B cell (primary cell): ENCODE measurements at regions of chr7 and their contacts with region 1.

Region 1: GRCh38 chr7:136009488-136010079 is 32.4 kb upstream of the MTPN start:
- DNase-seq: peak; percentile 70
- ATAC-seq: peak; percentile 41
- H3K4me3 ChIP-seq: no peak overlapping the region
- H3K4me3 Mint-ChIP-seq: no peak overlapping the region
- H3K27ac ChIP-seq: no peak overlapping the region
- H3K27ac Mint-ChIP-seq: no peak overlapping the region
- H3K4me1 ChIP-seq: peaks cover 0 to 5% of the 10 kb centered on the region in 2 donors
- H3K4me1 Mint-ChIP-seq: peaks cover 7% of the 10 kb centered on the region
- H3K27me3 ChIP-seq: no peaks in the 10 kb centered on the region
- H3K27me3 Mint-ChIP-seq: peaks cover 4% of the 10 kb centered on the region
- CTCF ChIP-seq: peak; percentile 91

Region 2: GRCh38 chr7:135795846-135796570 is 213.6 kb before region 1 on chr7:
- CTCF ChIA-PET with region 1: interaction called, 129 read pairs
- POLR2A ChIA-PET with region 1: no interaction called
- intact Hi-C with region 1: no loop called
- DNase-seq: no peak
- ATAC-seq: no peak
- H3K4me3 ChIP-seq: no peak overlapping the region
- H3K4me3 Mint-ChIP-seq: no peak overlapping the region
- H3K27ac ChIP-seq: no peak overlapping the region
- H3K27ac Mint-ChIP-seq: no peak overlapping the region
- H3K4me1 ChIP-seq: peaks cover 2 to 4% of the 10 kb centered on the region in 2 donors
- H3K4me1 Mint-ChIP-seq: peaks cover 5% of the 10 kb centered on the region
- H3K27me3 ChIP-seq: peaks cover 0 to 17% (median 8%) of the 10 kb centered on the region in 4 experiments
- H3K27me3 Mint-ChIP-seq: peaks cover 25% of the 10 kb centered on the region
- CTCF ChIP-seq: no peak

Region 3: DNA sequence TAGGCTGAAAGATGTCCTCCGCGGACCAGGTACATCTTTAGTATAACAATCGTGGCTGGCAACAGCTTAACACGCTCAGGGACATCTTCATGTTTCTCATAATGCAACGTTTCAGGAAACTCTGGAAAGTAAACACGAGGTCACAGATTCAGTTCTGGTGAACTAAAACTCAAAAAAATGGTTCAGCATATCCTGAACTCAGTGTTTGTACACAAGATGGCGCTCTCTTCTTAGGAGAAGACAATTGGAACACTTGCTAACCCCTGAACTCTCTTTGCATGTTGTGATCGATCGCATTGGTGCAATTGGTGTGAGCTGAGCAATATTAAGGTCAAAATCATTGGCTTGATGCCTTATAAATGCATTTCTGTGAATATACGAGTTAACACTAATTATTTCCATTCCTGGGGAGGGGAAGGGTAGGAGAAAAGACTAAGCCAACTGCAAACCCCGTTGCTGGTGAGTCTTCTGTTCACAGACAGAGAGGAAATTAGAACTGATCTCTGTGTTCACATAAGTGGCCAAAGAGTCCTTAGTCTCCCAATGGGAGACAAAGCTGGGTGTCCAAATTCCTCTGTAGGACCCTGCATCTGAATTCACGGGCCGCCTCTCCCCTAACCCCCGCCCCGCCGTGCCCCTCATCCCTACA is 208.4 kb before region 1 on chr7:
- CTCF ChIA-PET with region 1: interaction called, 129 read pairs
- POLR2A ChIA-PET with region 1: no interaction called
- intact Hi-C with region 1: no loop called
- DNase-seq: peak; percentile 78
- ATAC-seq: peak; percentile 58
- H3K4me3 ChIP-seq: no peak overlapping the region
- H3K4me3 Mint-ChIP-seq: peak overlapping the region; percentile 52
- H3K27ac ChIP-seq: no peak overlapping the region
- H3K27ac Mint-ChIP-seq: no peak overlapping the region
- H3K4me1 ChIP-seq: peaks cover 5 to 8% of the 10 kb centered on the region in 2 donors
- H3K4me1 Mint-ChIP-seq: peaks cover 11% of the 10 kb centered on the region
- H3K27me3 ChIP-seq: peaks cover 0 to 17% (median 8%) of the 10 kb centered on the region in 4 experiments
- H3K27me3 Mint-ChIP-seq: peaks cover 14% of the 10 kb centered on the region
- CTCF ChIP-seq: peak; percentile 96

Region 4: GRCh38 chr7:135965602-135966001 is 44.0 kb before region 1 on chr7:
- CTCF ChIA-PET with region 1: interaction called, 8 read pairs
- POLR2A ChIA-PET with region 1: no interaction called
- intact Hi-C with region 1: loop called (anchors 5 kb)
- DNase-seq: no peak
- ATAC-seq: no peak
- H3K4me3 ChIP-seq: peak overlapping the region in 2 of 5 experiments; percentile 2 to 43
- H3K4me3 Mint-ChIP-seq: peak overlapping the region; percentile 79
- H3K27ac ChIP-seq: peak overlapping the region in 1 of 2 donors; percentile 51
- H3K27ac Mint-ChIP-seq: peak overlapping the region; percentile 48
- H3K4me1 ChIP-seq: peaks cover 64 to 91% of the 10 kb centered on the region in 2 donors
- H3K4me1 Mint-ChIP-seq: peaks cover 85% of the 10 kb centered on the region
- H3K27me3 ChIP-seq: no peaks in the 10 kb centered on the region
- H3K27me3 Mint-ChIP-seq: no peaks in the 10 kb centered on the region
- CTCF ChIP-seq: no peak

Region 5: GRCh38 chr7:135993950-135994349 is 15.6 kb before region 1 on chr7:
- CTCF ChIA-PET with region 1: interaction called, 25 read pairs
- POLR2A ChIA-PET with region 1: no interaction called
- intact Hi-C with region 1: no loop called
- DNase-seq: peak; percentile 33
- ATAC-seq: no peak
- H3K4me3 ChIP-seq: peak overlapping the region in 2 of 5 experiments; percentile 1 to 12
- H3K4me3 Mint-ChIP-seq: peak overlapping the region; percentile 16
- H3K27ac ChIP-seq: no peak overlapping the region
- H3K27ac Mint-ChIP-seq: peak overlapping the region; percentile 63
- H3K4me1 ChIP-seq: peaks cover 21 to 22% of the 10 kb centered on the region in 2 donors
- H3K4me1 Mint-ChIP-seq: peaks cover 33% of the 10 kb centered on the region
- H3K27me3 ChIP-seq: no peaks in the 10 kb centered on the region
- H3K27me3 Mint-ChIP-seq: no peaks in the 10 kb centered on the region
- CTCF ChIP-seq: no peak

Region 6: DNA sequence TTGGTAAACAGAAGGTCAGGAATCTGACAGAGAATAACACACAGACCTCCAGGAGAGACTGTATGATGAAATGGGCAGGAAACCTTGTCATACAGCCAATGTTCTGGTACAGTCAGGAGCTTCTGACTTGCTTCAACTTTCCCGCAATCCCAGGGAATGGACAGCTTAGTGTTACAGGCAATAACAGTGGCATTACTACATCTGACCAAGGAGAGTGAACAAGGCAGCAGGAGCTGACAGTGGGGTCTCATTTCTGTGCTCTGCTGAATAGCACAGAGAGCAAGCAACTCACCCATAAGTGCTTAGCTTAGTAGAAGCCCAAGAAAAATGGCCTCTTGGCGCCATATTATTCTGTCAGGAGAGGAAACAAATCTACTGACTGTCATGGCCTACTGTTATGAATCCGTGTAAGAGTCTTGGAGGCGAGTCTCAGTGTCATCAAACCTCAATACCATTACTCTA is 153.8 kb after region 1 on chr7:
- CTCF ChIA-PET with region 1: no interaction called
- POLR2A ChIA-PET with region 1: no interaction called
- intact Hi-C with region 1: no loop called
- DNase-seq: no peak
- ATAC-seq: no peak
- H3K4me3 ChIP-seq: no peak overlapping the region
- H3K4me3 Mint-ChIP-seq: no peak overlapping the region
- H3K27ac ChIP-seq: no peak overlapping the region
- H3K27ac Mint-ChIP-seq: no peak overlapping the region
- H3K4me1 ChIP-seq: no peaks in the 10 kb centered on the region
- H3K4me1 Mint-ChIP-seq: no peaks in the 10 kb centered on the region
- H3K27me3 ChIP-seq: no peaks in the 10 kb centered on the region
- H3K27me3 Mint-ChIP-seq: no peaks in the 10 kb centered on the region
- CTCF ChIP-seq: no peak